H1 (cell line): ENCODE measurements at regions of chr1 and their contacts with region 1.

Region 1: GRCh38 chr1:150235852-150236613 is at the start of gene ANP32E:
- DNase-seq: peak; percentile 88 to 94
- H3K4me3 ChIP-seq: peak within 1 kb of the TSS; percentile 84 to 99 (median 98)
- H3K27ac ChIP-seq: peak within 1 kb of the TSS; percentile 97
- H3K4me1 ChIP-seq: peaks cover 0 to 6% (median 2%) of the 10 kb centered on the region in 4 experiments; a peak in 5 of 7 replicates
- H3K27me3 ChIP-seq: no peaks in the 10 kb centered on the region
- CTCF ChIP-seq: no peak
- EP300 ChIP-seq: no peak
- POLR2A ChIP-seq: peak; percentile 83 to 91
- RAD21 ChIP-seq: peak in 1 of 2 experiments; percentile 24; a peak in 1 of 4 replicates
- total RNA-seq, gene ANP32E: 114 and 123 TPM in 2 replicates

Region 2: DNA sequence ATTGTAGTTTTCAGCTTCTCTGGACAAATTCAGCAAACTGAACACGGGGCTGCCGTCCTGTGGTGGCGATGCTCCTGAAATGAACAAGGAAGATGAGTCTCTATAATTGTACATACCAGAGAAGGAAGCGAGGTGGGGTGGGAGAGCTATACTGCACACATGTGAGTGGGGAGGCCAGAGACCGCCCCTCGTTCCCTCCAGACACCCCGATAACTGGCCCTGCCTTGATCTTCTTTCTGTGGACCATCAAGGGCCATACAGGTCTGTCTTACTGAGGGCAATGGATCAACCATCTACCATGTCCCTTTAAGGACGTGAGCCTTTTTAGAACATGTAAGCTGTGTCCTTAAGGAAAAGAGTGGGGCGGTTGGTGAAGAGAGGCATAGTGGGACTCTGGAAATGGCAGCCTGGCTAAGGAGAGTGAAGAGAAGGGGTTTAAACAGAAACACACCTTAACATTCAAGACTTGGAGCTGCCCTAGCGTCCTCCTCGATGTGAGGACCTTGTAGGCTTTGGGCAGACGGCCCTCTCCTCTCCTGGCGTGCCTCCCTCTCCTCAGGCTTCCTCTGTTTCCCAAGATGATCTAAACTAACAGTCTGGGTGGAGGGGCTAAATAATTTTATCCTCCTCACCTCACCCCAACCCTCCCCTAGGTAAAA is 80.5 kb before region 1 on chr1:
- CTCF ChIA-PET with region 1: no interaction called
- POLR2A ChIA-PET with region 1: no interaction called
- DNase-seq: no peak
- H3K4me3 ChIP-seq: no peak overlapping the region
- H3K27ac ChIP-seq: no peak overlapping the region
- H3K4me1 ChIP-seq: peaks cover 0 to 10% (median 4%) of the 10 kb centered on the region in 4 experiments; a peak in 6 of 7 replicates
- H3K27me3 ChIP-seq: no peaks in the 10 kb centered on the region
- CTCF ChIP-seq: no peak
- EP300 ChIP-seq: no peak
- POLR2A ChIP-seq: peak in 1 of 2 experiments; percentile 23; a peak in 1 of 3 replicates
- RAD21 ChIP-seq: no peak

Region 3: DNA sequence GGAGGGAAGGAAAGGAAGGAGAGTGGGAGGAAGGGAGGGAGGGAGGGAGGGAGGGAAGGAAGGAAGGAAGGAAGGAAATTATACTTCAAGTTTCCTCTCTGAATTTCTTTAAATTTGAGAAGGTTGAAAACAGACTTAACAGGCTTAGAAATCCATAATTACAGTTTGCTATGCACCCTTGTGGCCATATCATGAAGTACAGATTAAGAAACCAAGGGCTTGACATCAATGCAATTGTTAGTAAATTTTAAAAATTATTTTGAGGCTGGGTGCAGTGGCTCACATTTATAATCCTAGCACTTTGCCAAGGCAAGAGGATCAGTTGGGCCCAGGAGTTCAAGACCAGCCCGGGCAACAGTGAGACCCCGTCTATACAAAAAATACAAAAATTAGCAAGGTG is 14.5 kb before region 1 on chr1:
- CTCF ChIA-PET with region 1: interaction called, 9 read pairs
- POLR2A ChIA-PET with region 1: interaction called, 17 read pairs
- DNase-seq: peak in 1 of 2 experiments; percentile 35
- H3K4me3 ChIP-seq: no peak overlapping the region
- H3K27ac ChIP-seq: no peak overlapping the region
- H3K4me1 ChIP-seq: no peaks in the 10 kb centered on the region
- H3K27me3 ChIP-seq: no peaks in the 10 kb centered on the region
- CTCF ChIP-seq: peak in 1 of 3 experiments; percentile 25; a peak in 2 of 4 replicates
- EP300 ChIP-seq: no peak
- POLR2A ChIP-seq: no peak
- RAD21 ChIP-seq: no peak

Region 4: GRCh38 chr1:150249936-150250335 is 13.9 kb after region 1 on chr1:
- CTCF ChIA-PET with region 1: interaction called, 4 read pairs
- POLR2A ChIA-PET with region 1: interaction called, 61 read pairs
- DNase-seq: no peak
- H3K4me3 ChIP-seq: no peak overlapping the region
- H3K27ac ChIP-seq: no peak overlapping the region
- H3K4me1 ChIP-seq: no peaks in the 10 kb centered on the region
- H3K27me3 ChIP-seq: no peaks in the 10 kb centered on the region
- CTCF ChIP-seq: no peak
- EP300 ChIP-seq: no peak
- POLR2A ChIP-seq: no peak
- RAD21 ChIP-seq: no peak

Region 5: GRCh38 chr1:150268705-150269403 is 32.8 kb after region 1 on chr1 and contains the start of gene APH1A:
- CTCF ChIA-PET with region 1: interaction called, 5 read pairs
- POLR2A ChIA-PET with region 1: interaction called, 14 read pairs
- DNase-seq: peak; percentile 92 to 95
- H3K4me3 ChIP-seq: peak within 1 kb of the TSS; percentile 81 to 99 (median 96)
- H3K27ac ChIP-seq: peak within 1 kb of the TSS; percentile 69
- H3K4me1 ChIP-seq: peaks cover 8 to 13% (median 10%) of the 10 kb centered on the region in 4 experiments; a peak in 6 of 7 replicates
- H3K27me3 ChIP-seq: no peaks in the 10 kb centered on the region
- CTCF ChIP-seq: no peak
- EP300 ChIP-seq: peak in 1 of 2 experiments; percentile 83; a peak in 1 of 3 replicates
- POLR2A ChIP-seq: no peak; a peak in 1 of 3 replicates
- RAD21 ChIP-seq: no peak
- total RNA-seq, gene APH1A: 110 and 111 TPM in 2 replicates